Activated CD4-positive, alpha-beta memory T cell treated with anti-CD3 and anti-CD28 coated beads for 36 hours (primary cell): ENCODE measurements at regions of chr10 and their contacts with region 1.

Region 1: GRCh38 chr10:110535958-110536891 is 31.3 kb upstream of the SMC3 start:
- DNase-seq: peak; percentile 91
- H3K4me3 Mint-ChIP-seq: peak overlapping the region; percentile 28
- H3K27ac Mint-ChIP-seq: peak overlapping the region; percentile 79
- H3K4me1 Mint-ChIP-seq: peaks cover 30% of the 10 kb centered on the region
- H3K27me3 Mint-ChIP-seq: no peaks in the 10 kb centered on the region

Region 2: GRCh38 chr10:110311357-110311949 is 224.8 kb before region 1 on chr10:
- CTCF ChIA-PET with region 1: interaction called, 6 read pairs
- POLR2A ChIA-PET with region 1: no interaction called
- intact Hi-C with region 1: loop called (anchors 2 kb)
- DNase-seq: peak; percentile 52
- H3K4me3 Mint-ChIP-seq: no peak overlapping the region
- H3K27ac Mint-ChIP-seq: peak overlapping the region; percentile 9
- H3K4me1 Mint-ChIP-seq: peaks cover 31% of the 10 kb centered on the region
- H3K27me3 Mint-ChIP-seq: peaks cover 2% of the 10 kb centered on the region

Region 3: GRCh38 chr10:110512461-110513187 is 23.6 kb before region 1 on chr10:
- CTCF ChIA-PET with region 1: interaction called, 4 read pairs
- POLR2A ChIA-PET with region 1: no interaction called
- intact Hi-C with region 1: loop called (anchors 1 kb)
- DNase-seq: peak; percentile 82
- H3K4me3 Mint-ChIP-seq: no peak overlapping the region
- H3K27ac Mint-ChIP-seq: peak overlapping the region; percentile 85
- H3K4me1 Mint-ChIP-seq: peaks cover 60% of the 10 kb centered on the region
- H3K27me3 Mint-ChIP-seq: no peaks in the 10 kb centered on the region

Region 4: DNA sequence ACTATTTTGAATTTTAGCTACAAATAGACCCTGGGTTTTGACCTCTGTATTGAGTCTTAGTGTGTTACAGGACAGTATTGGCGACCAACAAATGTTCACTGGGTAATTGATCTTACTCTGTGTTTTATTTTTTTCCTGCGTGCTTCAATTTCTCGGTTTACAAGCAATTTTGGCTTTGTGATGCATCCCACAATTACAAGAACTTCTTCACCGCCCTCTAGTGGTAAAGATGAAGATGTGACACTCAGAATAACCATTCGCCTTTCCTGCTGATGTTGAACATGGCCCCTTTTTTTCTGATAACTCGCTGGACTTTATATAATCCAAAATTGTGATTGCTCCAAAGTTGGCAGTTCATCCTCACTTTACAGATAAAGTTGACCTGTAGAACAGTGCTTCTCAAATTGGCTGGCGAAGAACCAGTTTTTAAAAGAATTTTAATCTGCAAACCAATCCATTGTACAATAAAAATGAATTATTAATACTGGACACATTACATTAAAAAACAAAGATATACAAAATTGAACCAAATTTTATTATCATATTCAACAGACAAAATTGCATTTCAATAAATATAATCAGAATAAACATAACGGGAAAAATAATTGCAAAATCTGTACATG is 11.0 kb after region 1 on chr10:
- CTCF ChIA-PET with region 1: interaction called, 5 read pairs
- POLR2A ChIA-PET with region 1: no interaction called
- intact Hi-C with region 1: loop called (anchors 1 kb)
- DNase-seq: no peak
- H3K4me3 Mint-ChIP-seq: no peak overlapping the region
- H3K27ac Mint-ChIP-seq: no peak overlapping the region
- H3K4me1 Mint-ChIP-seq: peaks cover 10% of the 10 kb centered on the region
- H3K27me3 Mint-ChIP-seq: peaks cover 12% of the 10 kb centered on the region